Activated T-helper 1 cell treated with anti-CD3 and anti-CD28 coated beads, Interleukin-12 subunit alpha, Interleukin-12 subunit beta, Interleukin-2, Interleukin-4 antibody, amounts not matched to agents 30 ng/mL and 10 ng/mL and 1 ng/mL, durations not matched to agents 14 hours and 24 hours and 36 hours (primary cell): ENCODE measurements at regions of chr11 and their contacts with region 1.

Region 1: GRCh38 chr11:64778508-64779346 is at the start of gene SF1:
- DNase-seq: peak; percentile 99
- H3K4me3 Mint-ChIP-seq: peak within 1 kb of the TSS; percentile 87
- H3K27ac Mint-ChIP-seq: peak within 1 kb of the TSS; percentile 97
- H3K4me1 Mint-ChIP-seq: peaks cover 57% of the 10 kb centered on the region
- H3K27me3 Mint-ChIP-seq: peaks cover 2% of the 10 kb centered on the region
- total RNA-seq, gene SF1: 518 and 538 TPM in 2 replicates

Region 2: GRCh38 chr11:64742889-64743590 is 35.7 kb before region 1 on chr11:
- intact Hi-C with region 1: loop called (anchors 1 kb)
- DNase-seq: peak; percentile 74
- H3K4me3 Mint-ChIP-seq: no peak overlapping the region
- H3K27ac Mint-ChIP-seq: no peak overlapping the region
- H3K4me1 Mint-ChIP-seq: peaks cover 27% of the 10 kb centered on the region
- H3K27me3 Mint-ChIP-seq: no peaks in the 10 kb centered on the region

Region 3: GRCh38 chr11:64810271-64810890 is 31.7 kb after region 1 on chr11 and contains the start of gene MEN1:
- intact Hi-C with region 1: loop called (anchors 1 kb)
- DNase-seq: peak; percentile 67
- H3K4me3 Mint-ChIP-seq: peak within 1 kb of the TSS; percentile 95
- H3K27ac Mint-ChIP-seq: peak within 1 kb of the TSS; percentile 89
- H3K4me1 Mint-ChIP-seq: peaks cover 22% of the 10 kb centered on the region
- H3K27me3 Mint-ChIP-seq: peaks cover 5% of the 10 kb centered on the region
- total RNA-seq, gene MEN1: 39.6 and 43.8 TPM in 2 replicates

Region 4: GRCh38 chr11:64924102-64924851 is 145.6 kb after region 1 on chr11 and contains the start of gene PPP2R5B:
- intact Hi-C with region 1: loop called (anchors 1 kb)
- DNase-seq: peak; percentile 89
- H3K4me3 Mint-ChIP-seq: peak within 1 kb of the TSS; percentile 93
- H3K27ac Mint-ChIP-seq: peak within 1 kb of the TSS; percentile 97
- H3K4me1 Mint-ChIP-seq: peaks cover 20% of the 10 kb centered on the region
- H3K27me3 Mint-ChIP-seq: no peaks in the 10 kb centered on the region
- total RNA-seq, gene PPP2R5B: 7.3 and 14.0 TPM in 2 replicates

Region 5: GRCh38 chr11:65117216-65118096 is 338.7 kb after region 1 on chr11 and contains the start of gene ZNHIT2:
- intact Hi-C with region 1: loop called (anchors 2 kb)
- DNase-seq: peak; percentile 100
- H3K4me3 Mint-ChIP-seq: peak within 1 kb of the TSS; percentile 90
- H3K27ac Mint-ChIP-seq: peak within 1 kb of the TSS; percentile 93
- H3K4me1 Mint-ChIP-seq: peaks cover 52% of the 10 kb centered on the region
- H3K27me3 Mint-ChIP-seq: no peaks in the 10 kb centered on the region
- total RNA-seq, gene ZNHIT2: 20.8 and 22.1 TPM in 2 replicates